Activated CD4-positive, alpha-beta T cell treated with anti-CD3 and anti-CD28 coated beads, Interleukin-2, amount 10 ng/mL, durations not matched to agents 7 days and 5 days (primary cell): ENCODE measurements at regions of chr10 and their contacts with region 1.

Region 1: GRCh38 chr10:109968953-109969759 is 38.6 kb upstream of the ADD3 start:
- DNase-seq: no peak
- H3K4me3 Mint-ChIP-seq: no peak overlapping the region
- H3K27ac Mint-ChIP-seq: no peak overlapping the region
- H3K4me1 Mint-ChIP-seq: no peaks in the 10 kb centered on the region
- H3K27me3 Mint-ChIP-seq: peaks cover 8% of the 10 kb centered on the region

Region 2: GRCh38 chr10:109956454-109957091 is 12.6 kb before region 1 on chr10:
- CTCF ChIA-PET with region 1: interaction called, 10 read pairs
- POLR2A ChIA-PET with region 1: no interaction called
- DNase-seq: peak; percentile 17
- H3K4me3 Mint-ChIP-seq: no peak overlapping the region
- H3K27ac Mint-ChIP-seq: no peak overlapping the region
- H3K4me1 Mint-ChIP-seq: peaks cover 5% of the 10 kb centered on the region
- H3K27me3 Mint-ChIP-seq: peaks cover 5% of the 10 kb centered on the region

Region 3: DNA sequence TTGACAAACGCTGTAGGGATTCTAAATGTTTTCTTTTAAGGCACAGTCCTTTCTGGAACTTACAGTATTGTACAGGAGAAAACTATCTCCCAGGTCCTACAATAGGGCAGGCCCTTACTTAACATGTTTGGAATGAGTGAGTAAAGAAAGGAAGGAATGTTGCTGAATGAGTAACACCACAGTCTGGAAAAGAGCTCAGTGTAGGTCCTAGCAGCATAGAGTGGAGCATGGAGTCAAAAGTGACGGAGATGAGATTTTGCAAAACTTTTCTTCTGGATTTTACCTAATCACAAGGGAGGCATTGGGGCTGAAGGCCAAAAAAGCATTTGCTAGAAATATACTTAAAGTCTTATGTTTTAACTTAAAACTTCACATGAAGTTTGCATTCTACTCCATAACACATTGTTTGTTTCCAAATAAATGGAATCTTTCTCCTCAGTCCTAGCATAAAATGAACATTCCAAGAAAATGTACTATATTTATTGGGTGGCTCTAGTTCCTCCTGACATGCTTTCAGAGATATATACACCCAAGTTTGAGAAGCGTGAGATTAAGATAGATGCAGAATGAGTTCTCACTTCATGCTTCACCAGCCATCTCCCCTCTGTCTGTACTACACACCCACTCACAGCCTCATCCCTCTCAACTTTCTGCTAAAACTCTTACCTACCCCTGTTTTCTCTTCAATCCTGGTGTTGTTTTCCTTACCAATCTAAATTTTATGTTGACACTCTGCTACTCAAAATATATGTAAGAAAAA is 18.5 kb after region 1 on chr10:
- CTCF ChIA-PET with region 1: no interaction called
- POLR2A ChIA-PET with region 1: no interaction called
- DNase-seq: no peak
- H3K4me3 Mint-ChIP-seq: no peak overlapping the region
- H3K27ac Mint-ChIP-seq: no peak overlapping the region
- H3K4me1 Mint-ChIP-seq: no peaks in the 10 kb centered on the region
- H3K27me3 Mint-ChIP-seq: peaks cover 8% of the 10 kb centered on the region

Region 4: DNA sequence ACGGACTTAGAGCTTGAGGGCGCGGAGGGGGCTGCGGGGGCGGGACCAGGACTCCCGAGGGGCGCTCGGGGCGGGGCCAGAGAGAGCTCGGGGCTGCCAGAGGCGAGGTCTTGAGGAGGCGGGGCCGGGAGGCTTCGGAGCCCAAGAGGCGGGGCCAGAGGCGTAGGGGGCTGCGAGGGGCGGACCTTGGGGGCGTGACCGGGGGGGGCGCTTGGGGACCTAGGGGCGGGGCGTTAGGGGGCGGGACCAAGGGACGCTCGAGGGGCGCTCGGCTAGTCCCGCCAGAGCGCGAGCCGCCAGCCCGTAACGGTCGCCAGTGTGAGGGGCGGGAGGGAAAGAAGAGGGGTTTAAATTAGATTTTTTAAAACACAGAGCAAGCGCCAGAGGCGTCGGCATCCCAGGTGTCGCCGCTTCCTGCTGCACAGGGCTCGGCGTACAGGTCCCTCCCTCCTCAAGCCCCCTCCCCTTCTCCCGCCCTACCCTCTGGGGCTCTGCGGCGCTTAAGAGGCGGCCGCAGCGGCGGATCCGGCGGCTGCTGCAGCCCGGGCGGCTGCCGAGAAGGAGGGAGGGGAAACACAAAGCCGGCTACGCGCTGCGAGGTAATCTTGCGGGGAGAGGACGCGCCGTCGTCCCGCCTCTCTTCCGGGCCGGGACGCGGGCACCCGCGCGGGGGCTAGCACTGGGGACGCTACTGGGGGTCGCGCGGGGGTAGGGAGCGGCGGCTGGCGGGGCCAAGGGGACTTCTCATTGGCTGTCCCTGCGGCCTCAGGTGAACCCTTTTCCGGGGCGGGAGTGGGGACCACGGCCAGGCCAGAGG is 38.8 kb after region 1 on chr10 and contains the start of gene ADD3:
- CTCF ChIA-PET with region 1: no interaction called
- POLR2A ChIA-PET with region 1: no interaction called
- DNase-seq: peak; percentile 88
- H3K4me3 Mint-ChIP-seq: no peak within 1 kb of the TSS
- H3K27ac Mint-ChIP-seq: peak within 1 kb of the TSS; percentile 93
- H3K4me1 Mint-ChIP-seq: peaks cover 40% of the 10 kb centered on the region
- H3K27me3 Mint-ChIP-seq: peaks cover 6% of the 10 kb centered on the region
- total RNA-seq, gene ADD3: 360 to 444 TPM